ENCODE measurements at regions of chr3 and their contacts with region 1.

Region 1: DNA sequence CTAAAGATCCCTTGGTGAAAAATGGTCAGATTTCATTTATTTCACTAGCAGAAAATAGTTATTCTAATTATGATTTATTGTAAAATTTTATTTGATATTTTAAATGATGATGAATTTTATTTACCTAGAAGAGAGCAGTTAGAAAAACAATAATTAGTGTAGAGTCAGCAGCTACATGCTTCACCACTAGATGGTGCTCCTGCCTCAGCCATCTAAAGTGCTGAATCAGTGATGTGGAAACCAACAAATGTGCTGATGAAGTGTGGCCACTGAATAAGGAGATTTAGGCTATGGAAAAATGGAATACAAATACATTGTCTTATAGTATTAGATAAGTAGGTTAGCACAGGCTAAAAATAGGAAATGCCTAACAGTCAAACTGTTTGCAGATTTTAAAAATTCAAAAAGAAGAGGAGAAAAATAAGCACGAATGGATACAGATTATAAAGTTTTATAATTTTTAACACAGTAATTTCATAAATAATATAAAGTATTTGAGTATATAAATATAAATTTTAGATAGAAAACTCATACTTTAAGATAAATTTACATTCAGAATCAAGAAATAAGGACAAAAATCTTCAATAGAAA is 109.8 kb downstream of the PPP2R3A start:
- DNase-seq: peak; percentile 83
- ATAC-seq: peak; percentile 55
- H3K4me3 Mint-ChIP-seq: no peak overlapping the region
- H3K27ac Mint-ChIP-seq: no peak overlapping the region
- H3K4me1 Mint-ChIP-seq: no peaks in the 10 kb centered on the region
- H3K27me3 Mint-ChIP-seq: no peaks in the 10 kb centered on the region

Region 2: GRCh38 chr3:136196401-136197158 is 121.3 kb after region 1 on chr3:
- CTCF ChIA-PET with region 1: interaction called, 4 read pairs
- POLR2A ChIA-PET with region 1: no interaction called
- intact Hi-C with region 1: loop called (anchors 2 kb)
- DNase-seq: peak; percentile 100
- ATAC-seq: peak; percentile 82
- H3K4me3 Mint-ChIP-seq: peak overlapping the region; percentile 100
- H3K27ac Mint-ChIP-seq: peak overlapping the region; percentile 98
- H3K4me1 Mint-ChIP-seq: peaks cover 25% of the 10 kb centered on the region
- H3K27me3 Mint-ChIP-seq: no peaks in the 10 kb centered on the region

Region 3: GRCh38 chr3:136305878-136306277 is 230.6 kb after region 1 on chr3:
- CTCF ChIA-PET with region 1: interaction called, 3 read pairs
- POLR2A ChIA-PET with region 1: no interaction called
- intact Hi-C with region 1: loop called in 1 of 2 experiments (anchors 5 kb)
- DNase-seq: no peak
- ATAC-seq: peak; percentile 44
- H3K4me3 Mint-ChIP-seq: no peak overlapping the region
- H3K27ac Mint-ChIP-seq: no peak overlapping the region
- H3K4me1 Mint-ChIP-seq: no peaks in the 10 kb centered on the region
- H3K27me3 Mint-ChIP-seq: no peaks in the 10 kb centered on the region

Region 4: DNA sequence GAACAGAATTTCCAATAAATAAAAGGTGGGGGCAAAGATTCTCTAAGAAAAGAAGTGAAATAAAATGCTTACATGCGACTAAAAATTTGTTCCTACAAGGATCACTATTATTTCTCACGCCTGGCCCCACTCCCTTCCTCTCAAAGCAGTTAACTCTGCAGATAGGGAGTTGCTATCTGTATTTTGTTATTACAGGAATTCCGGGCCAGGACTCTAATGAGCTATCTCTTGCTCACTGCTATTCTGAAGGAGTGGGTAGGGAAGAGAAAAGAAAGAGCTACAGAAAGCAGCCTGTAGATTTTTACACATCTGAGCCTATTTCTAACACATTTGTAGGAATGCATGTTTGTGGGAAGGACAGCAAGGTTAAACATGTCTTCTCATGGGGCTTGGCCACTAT is 315.3 kb after region 1 on chr3:
- CTCF ChIA-PET with region 1: interaction called, 3 read pairs
- POLR2A ChIA-PET with region 1: no interaction called
- intact Hi-C with region 1: loop called (anchors 2 to 10 kb)
- DNase-seq: no peak
- ATAC-seq: no peak
- H3K4me3 Mint-ChIP-seq: no peak overlapping the region
- H3K27ac Mint-ChIP-seq: no peak overlapping the region
- H3K4me1 Mint-ChIP-seq: no peaks in the 10 kb centered on the region
- H3K27me3 Mint-ChIP-seq: no peaks in the 10 kb centered on the region

Region 5: DNA sequence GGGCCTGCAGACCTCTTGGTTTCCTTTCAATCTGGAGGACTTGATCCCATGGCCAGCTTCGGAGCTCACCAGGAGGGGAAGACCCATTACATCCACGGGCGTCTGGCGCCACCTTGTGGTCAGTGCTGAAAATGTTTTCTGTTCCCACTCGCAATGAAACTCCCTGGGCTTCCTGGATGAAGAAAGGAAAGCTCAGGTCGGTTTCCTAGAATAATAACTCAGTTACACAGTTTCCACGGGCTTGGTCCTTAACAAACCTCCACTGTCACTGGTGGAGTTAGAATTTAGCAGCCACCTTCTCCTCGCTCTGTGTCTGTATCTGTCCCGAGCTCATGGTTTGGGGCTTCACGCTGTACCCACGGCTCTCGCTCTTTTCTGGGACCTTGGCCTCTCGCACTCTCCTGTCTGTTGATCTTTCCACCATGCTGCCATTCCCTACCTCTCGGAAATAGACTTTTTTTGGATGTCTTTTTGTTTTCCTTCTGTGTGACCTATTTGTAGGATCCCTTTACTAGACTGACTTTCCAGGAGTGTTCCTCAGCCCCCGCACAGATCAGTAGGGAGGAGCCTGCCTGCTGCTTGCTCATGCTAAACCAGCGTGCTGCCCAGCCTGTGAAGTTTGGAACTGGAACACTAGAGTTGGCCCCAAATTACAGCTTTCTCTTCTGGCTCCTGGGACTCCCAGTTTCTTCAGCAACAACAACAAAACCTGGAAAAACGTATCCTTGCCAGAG is 938.8 kb after region 1 on chr3:
- CTCF ChIA-PET with region 1: interaction called, 15 read pairs
- POLR2A ChIA-PET with region 1: no interaction called
- intact Hi-C with region 1: loop called (anchors 1 kb)
- DNase-seq: peak; percentile 90
- ATAC-seq: peak; percentile 89
- H3K4me3 Mint-ChIP-seq: peak overlapping the region; percentile 67
- H3K27ac Mint-ChIP-seq: peak overlapping the region; percentile 57
- H3K4me1 Mint-ChIP-seq: peaks cover 7% of the 10 kb centered on the region
- H3K27me3 Mint-ChIP-seq: no peaks in the 10 kb centered on the region

Region 6: GRCh38 chr3:137946345-137946973 is 1871.1 kb after region 1 on chr3:
- CTCF ChIA-PET with region 1: no interaction called
- POLR2A ChIA-PET with region 1: no interaction called
- intact Hi-C with region 1: loop called in 1 of 2 experiments (anchors 10 kb)
- DNase-seq: peak; percentile 71
- ATAC-seq: peak; percentile 47
- H3K4me3 Mint-ChIP-seq: no peak overlapping the region
- H3K27ac Mint-ChIP-seq: no peak overlapping the region
- H3K4me1 Mint-ChIP-seq: peaks cover 5% of the 10 kb centered on the region
- H3K27me3 Mint-ChIP-seq: no peaks in the 10 kb centered on the region

Measured in activated CD4-positive, alpha-beta T cell treated with anti-CD3 and anti-CD28 coated beads for 36 hours (primary cell).